OCI-LY7 (cell line): ENCODE measurements at regions of chr3 and their contacts with region 1.

Region 1: DNA sequence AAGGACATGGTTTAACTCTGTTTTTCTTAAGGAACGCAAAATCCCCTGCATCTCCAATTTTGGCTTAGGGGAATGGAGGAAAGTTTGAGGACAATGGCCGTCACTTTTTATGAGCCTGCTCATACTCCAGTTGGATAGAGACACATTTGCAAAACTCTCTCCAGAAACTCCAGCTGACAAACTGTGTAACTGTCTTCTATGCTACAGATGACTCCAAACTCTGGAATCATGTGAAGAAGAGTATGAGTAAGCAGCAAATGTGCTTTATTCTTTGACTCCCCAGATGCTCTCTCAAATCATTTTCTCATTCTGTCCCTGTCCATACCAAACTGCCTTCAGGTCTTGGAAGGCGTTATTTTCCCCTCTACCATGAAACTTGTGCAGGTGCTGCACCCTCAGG is 226.5 kb upstream of the GPR149 start:
- DNase-seq: no peak
- H3K4me3 ChIP-seq: no peak overlapping the region
- H3K27ac ChIP-seq: no peak overlapping the region
- H3K4me1 ChIP-seq: no peaks in the 10 kb centered on the region
- CTCF ChIP-seq: no peak

Region 2: DNA sequence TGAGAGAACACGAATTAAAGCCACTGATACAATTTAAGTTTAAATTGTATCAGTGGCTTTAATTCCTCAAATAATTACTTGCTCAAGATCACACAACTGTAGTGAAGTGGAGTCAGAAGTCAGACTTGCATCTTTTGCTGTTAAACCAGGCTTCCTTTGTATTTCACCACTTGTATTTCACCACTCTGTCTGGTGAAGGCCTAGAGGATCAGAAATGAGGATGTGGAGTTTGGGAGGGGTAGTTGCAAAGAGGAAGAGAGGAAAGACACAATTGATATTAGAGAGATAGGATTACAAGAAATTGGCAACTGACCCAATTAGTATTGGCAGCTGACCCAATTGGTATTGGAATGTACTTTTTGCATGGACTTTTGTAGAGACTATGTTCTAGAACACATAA is 61.6 kb after region 1 on chr3:
- CTCF ChIA-PET with region 1: no interaction called
- POLR2A ChIA-PET with region 1: interaction called, 3 read pairs
- intact Hi-C with region 1: loop called (anchors 10 kb)
- DNase-seq: no peak
- H3K4me3 ChIP-seq: no peak overlapping the region
- H3K27ac ChIP-seq: no peak overlapping the region
- H3K4me1 ChIP-seq: no peaks in the 10 kb centered on the region
- CTCF ChIP-seq: no peak